ENCODE measurements at regions of chr14 and their contacts with region 1.

Region 1: DNA sequence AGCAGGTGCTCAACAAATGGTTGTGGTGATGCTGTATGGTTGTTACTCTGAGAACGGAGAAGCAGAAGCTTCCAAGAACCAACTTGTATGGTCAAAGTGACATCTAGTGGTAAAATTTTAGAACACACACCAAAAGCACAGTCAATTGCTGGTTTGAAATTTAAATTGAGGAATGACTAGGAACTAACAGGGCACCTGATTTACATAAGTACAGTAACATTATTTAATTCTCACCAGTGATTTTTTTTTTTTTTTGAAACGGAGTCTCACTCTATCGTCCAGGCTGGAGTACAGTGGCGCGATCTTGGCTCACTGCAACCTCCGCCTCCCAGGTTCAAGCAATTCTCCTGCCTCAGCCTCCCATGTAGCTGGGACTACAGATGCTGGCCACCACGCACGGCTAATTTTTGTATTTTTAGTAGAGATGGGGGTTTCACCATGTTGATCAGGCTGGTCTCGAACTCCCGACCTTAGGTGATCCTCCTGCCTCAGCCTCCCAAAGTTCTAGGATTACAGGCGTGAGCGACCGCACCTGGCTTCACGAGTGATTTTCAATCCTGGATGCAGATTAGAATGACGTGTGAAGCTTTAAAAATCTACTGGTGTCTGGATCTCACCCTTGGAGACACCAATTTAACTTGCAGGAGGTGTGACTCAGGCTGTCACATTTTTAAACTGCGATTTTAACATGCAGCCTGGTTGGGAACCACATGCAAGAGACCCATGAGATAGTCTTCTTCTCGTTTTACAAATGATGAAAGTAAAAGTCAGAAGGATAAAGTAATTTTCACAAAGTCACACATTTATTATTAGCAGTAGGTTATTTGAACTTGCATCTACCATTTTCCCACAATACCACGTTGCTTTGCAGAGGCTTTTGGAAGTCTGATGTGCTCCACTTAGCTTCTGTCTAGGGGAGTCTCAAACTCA is 14.1 kb upstream of the NUMB start:
- DNase-seq: no peak
- ATAC-seq: peak; percentile 82
- H3K4me3 Mint-ChIP-seq: no peak overlapping the region
- H3K27ac Mint-ChIP-seq: no peak overlapping the region
- H3K4me1 Mint-ChIP-seq: peaks cover under 1% of the 10 kb centered on the region; the same call in 1 of the 2 replicates
- H3K27me3 Mint-ChIP-seq: no peaks in the 10 kb centered on the region
- CTCF ChIP-seq: peak; percentile 43; the same call in 1 of the 2 replicates

Region 2: DNA sequence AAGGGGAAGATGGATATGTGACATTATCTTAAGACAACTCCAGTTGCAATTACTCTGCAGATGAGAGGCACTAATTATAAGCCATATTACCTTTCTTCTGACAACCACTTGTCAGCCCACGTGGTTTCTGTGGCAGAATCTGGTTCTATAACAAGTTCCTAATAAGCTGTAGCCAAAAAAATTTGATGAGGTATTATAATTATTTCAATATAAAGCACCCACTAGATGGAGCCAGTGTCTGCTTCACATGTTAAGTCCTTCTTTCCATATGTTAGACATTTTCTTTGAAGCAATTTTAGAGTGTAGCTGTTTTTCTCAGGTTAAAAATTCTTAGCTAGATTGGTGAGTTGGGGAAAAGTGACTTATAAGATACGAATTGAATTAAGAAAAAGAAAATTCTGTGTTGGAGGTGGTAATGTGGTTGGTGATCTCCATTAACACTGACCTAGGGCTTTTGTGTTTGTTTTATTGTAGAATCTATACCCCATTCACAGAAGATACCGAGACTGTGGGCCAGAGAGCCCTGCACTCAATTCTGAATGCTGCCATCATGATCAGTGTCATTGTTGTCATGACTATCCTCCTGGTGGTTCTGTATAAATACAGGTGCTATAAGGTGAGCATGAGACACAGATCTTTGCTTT is 299.2 kb before region 1 on chr14:
- CTCF ChIA-PET with region 1: interaction called, 13 read pairs
- POLR2A ChIA-PET with region 1: no interaction called
- DNase-seq: no peak
- ATAC-seq: no peak
- H3K4me3 Mint-ChIP-seq: no peak overlapping the region
- H3K27ac Mint-ChIP-seq: no peak overlapping the region
- H3K4me1 Mint-ChIP-seq: peaks cover 21% of the 10 kb centered on the region
- H3K27me3 Mint-ChIP-seq: peaks cover 3% of the 10 kb centered on the region; the same call in 1 of the 2 replicates
- CTCF ChIP-seq: no peak

Region 3: DNA sequence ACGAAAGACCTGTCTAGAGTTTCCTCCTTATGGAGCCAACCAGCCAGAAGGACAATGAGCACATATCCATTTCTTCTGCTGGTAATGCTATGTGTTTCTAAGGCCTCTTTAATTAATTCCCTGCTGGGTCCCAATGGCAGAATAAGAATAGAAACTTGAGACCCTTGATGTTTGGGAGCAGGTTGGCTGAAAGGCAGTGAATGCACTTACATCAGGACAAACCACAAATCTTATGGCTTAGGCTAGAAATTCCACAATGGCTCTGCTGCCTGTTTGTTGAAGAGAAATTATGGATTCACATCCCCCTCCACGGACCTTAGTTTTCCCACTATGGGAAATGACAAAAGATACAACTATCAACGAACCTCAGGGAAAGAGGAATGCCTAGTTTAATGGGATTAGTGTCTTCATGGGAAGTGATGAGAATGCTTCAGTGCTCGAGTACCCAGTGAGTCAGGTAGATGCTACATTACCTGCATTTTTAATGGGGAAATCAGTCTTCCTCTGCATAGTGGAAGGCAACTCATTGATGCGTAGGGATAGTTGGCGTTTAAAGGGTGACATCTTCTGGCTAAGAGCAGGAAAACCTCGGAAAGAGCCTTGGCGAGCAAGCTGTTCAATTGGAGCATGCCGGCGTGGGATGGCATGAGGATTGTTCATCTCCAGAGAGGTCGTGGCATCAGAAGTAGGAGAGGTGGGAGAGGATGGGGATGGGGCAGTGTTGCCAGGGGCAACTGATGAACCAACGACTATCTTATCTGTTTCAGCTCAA is 188.7 kb before region 1 on chr14:
- CTCF ChIA-PET with region 1: interaction called, 12 read pairs
- POLR2A ChIA-PET with region 1: no interaction called
- DNase-seq: peak; percentile 45
- ATAC-seq: peak; percentile 75
- H3K4me3 Mint-ChIP-seq: peak overlapping the region; percentile 12; the same call in 1 of the 2 replicates
- H3K27ac Mint-ChIP-seq: peak overlapping the region; percentile 76
- H3K4me1 Mint-ChIP-seq: peaks cover 44% of the 10 kb centered on the region
- H3K27me3 Mint-ChIP-seq: peaks cover 18% of the 10 kb centered on the region
- CTCF ChIP-seq: no peak

Region 4: GRCh38 chr14:73432124-73432523 is 40.3 kb before region 1 on chr14:
- CTCF ChIA-PET with region 1: no interaction called
- POLR2A ChIA-PET with region 1: no interaction called
- DNase-seq: no peak
- ATAC-seq: no peak
- H3K4me3 Mint-ChIP-seq: no peak overlapping the region
- H3K27ac Mint-ChIP-seq: no peak overlapping the region
- H3K4me1 Mint-ChIP-seq: peaks cover 6% of the 10 kb centered on the region
- H3K27me3 Mint-ChIP-seq: no peaks in the 10 kb centered on the region
- CTCF ChIP-seq: no peak

Region 5: GRCh38 chr14:73458151-73458976 is 14.1 kb before region 1 on chr14 and contains the start of gene NUMB:
- CTCF ChIA-PET with region 1: interaction called, 14 read pairs
- POLR2A ChIA-PET with region 1: interaction called, 4 read pairs
- DNase-seq: peak; percentile 98
- ATAC-seq: peak; percentile 95
- H3K4me3 Mint-ChIP-seq: peak within 1 kb of the TSS; percentile 89
- H3K27ac Mint-ChIP-seq: peak within 1 kb of the TSS; percentile 97
- H3K4me1 Mint-ChIP-seq: peaks cover 41% of the 10 kb centered on the region
- H3K27me3 Mint-ChIP-seq: no peaks in the 10 kb centered on the region; the same call in 1 of the 2 replicates
- CTCF ChIP-seq: no peak
- total RNA-seq, gene NUMB: 42.0 to 54.0 TPM (median 53.8 TPM) in 3 replicates

Region 6: DNA sequence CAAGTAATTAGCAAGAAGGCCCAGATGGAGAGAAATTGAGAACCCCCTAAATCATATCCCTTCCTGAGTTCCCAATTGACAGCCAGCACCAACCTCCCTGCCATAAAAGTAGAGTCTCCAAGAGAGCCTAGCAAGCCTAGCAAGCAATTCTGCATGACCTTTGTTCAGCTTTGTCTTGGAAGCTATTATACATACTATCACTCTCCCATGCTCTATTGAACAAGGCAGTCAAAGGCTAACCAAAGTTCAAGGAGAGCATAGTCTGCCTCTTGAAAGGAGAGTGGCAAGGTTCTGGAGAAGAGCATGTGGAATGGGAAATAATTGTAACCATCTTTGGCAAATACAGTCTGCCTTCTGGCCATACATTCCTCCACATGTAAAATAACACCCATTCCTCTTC is 127.0 kb after region 1 on chr14:
- CTCF ChIA-PET with region 1: no interaction called
- POLR2A ChIA-PET with region 1: no interaction called
- DNase-seq: no peak
- ATAC-seq: no peak
- H3K4me3 Mint-ChIP-seq: no peak overlapping the region
- H3K27ac Mint-ChIP-seq: no peak overlapping the region
- H3K4me1 Mint-ChIP-seq: no peaks in the 10 kb centered on the region
- H3K27me3 Mint-ChIP-seq: no peaks in the 10 kb centered on the region; the same call in 1 of the 2 replicates
- CTCF ChIP-seq: no peak

Measured in WTC11 (cell line).